GM12878 (cell line): ENCODE measurements at regions of chr9 and their contacts with region 1.

Region 1: GRCh38 chr9:70979966-70980365 is 141.5 kb downstream of the TRPM3 start:
- DNase-seq: no peak
- ATAC-seq: no peak
- H3K4me3 ChIP-seq: no peak overlapping the region
- H3K27ac ChIP-seq: no peak overlapping the region
- H3K4me1 ChIP-seq: no peaks in the 10 kb centered on the region
- H3K27me3 ChIP-seq: no peaks in the 10 kb centered on the region
- CTCF ChIP-seq: no peak
- EP300 ChIP-seq: no peak
- POLR2A ChIP-seq: no peak
- RAD21 ChIP-seq: no peak

Region 2: DNA sequence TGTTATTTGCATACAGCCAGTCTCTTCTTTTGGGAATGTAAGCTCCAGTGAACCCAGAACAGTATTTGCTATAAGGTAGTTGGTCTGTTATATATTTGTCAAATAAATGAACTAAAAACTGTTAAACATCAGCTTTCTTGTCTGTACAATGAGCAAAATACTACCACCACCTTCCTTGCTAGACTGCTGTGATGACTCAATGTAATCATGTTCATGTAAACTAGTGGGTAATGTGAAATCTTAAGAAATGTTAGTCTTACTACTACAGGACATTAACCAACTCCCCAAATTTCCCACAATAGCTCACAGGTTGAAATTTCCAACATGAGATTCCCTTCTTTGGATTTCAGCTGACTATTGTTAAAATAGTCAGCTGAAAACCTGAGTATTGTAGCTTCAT is 34.7 kb before region 1 on chr9:
- CTCF ChIA-PET with region 1: no interaction called
- POLR2A ChIA-PET with region 1: no interaction called
- RAD21 ChIA-PET with region 1: no interaction called
- SMC1A ChIA-PET with region 1: no interaction called
- in situ Hi-C with region 1: no loop called
- intact Hi-C with region 1: loop called (anchors 1 kb)
- DNase-seq: no peak
- ATAC-seq: no peak
- H3K4me3 ChIP-seq: no peak overlapping the region
- H3K27ac ChIP-seq: no peak overlapping the region
- H3K4me1 ChIP-seq: 0 out of 2 replicates have a peak, but pooled peaks cover 2% of the 10 kb centered on the region
- H3K27me3 ChIP-seq: no peaks in the 10 kb centered on the region
- CTCF ChIP-seq: no peak
- EP300 ChIP-seq: no peak
- POLR2A ChIP-seq: no peak
- RAD21 ChIP-seq: no peak